ENCODE measurements at regions of chr18 and their contacts with region 1.

Region 1: DNA sequence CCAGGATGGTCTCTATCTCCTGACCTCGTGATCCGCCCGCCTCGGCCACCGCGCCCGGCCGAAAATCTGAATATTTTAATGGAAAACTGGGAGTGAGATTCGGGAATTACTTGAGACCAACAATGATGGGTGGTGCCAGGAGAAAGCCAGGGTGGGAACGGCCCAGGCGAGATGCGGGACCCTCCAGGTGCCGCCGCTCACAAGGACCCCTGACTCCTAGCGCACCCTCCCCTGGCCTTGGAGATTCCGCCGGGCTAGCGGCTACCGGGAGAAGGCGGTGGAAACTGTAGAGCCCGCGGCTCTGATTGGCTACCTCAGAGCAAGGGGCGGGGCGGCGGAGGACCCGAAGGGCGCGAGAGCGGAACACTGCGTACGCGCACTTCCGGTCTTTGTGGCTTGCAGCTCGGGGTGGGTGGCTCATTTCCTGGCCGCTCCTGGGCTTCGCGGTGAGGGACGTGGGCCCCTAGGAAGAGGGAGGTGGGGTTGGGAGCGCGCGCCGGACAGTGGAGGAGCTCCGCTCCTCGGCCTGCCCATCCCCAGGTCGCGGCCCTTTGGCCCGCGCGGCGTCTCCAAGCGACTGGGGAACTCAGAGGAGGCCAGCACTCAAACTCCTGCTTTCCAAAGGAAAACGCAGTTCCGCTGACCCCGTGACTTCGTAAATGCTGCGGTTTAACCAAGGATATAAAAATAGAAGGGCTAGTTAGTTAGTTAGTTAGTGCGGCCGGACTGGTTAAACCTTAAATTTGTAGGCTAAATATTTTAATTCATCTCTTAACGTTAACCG is at the start of gene ZNF397:
- DNase-seq: peak; percentile 95
- H3K4me3 Mint-ChIP-seq: peak within 1 kb of the TSS; percentile 97
- H3K27ac Mint-ChIP-seq: peak within 1 kb of the TSS; percentile 97
- H3K4me1 Mint-ChIP-seq: peaks cover 12% of the 10 kb centered on the region
- H3K27me3 Mint-ChIP-seq: no peaks in the 10 kb centered on the region
- total RNA-seq, gene ZNF397: 18.8 and 21.0 TPM in 2 replicates

Region 2: GRCh38 chr18:34821749-34822148 is 419.1 kb before region 1 on chr18:
- intact Hi-C with region 1: no loop called
- DNase-seq: no peak
- H3K4me3 Mint-ChIP-seq: no peak overlapping the region
- H3K27ac Mint-ChIP-seq: no peak overlapping the region
- H3K4me1 Mint-ChIP-seq: no peaks in the 10 kb centered on the region
- H3K27me3 Mint-ChIP-seq: peaks cover 11% of the 10 kb centered on the region

Region 3: GRCh38 chr18:35040988-35041814 is 199.7 kb before region 1 on chr18 and contains the start of gene MAPRE2:
- intact Hi-C with region 1: loop called (anchors 1 kb)
- DNase-seq: peak; percentile 98
- H3K4me3 Mint-ChIP-seq: peak within 1 kb of the TSS; percentile 96
- H3K27ac Mint-ChIP-seq: peak within 1 kb of the TSS; percentile 99
- H3K4me1 Mint-ChIP-seq: peaks cover 57% of the 10 kb centered on the region
- H3K27me3 Mint-ChIP-seq: no peaks in the 10 kb centered on the region
- total RNA-seq, gene MAPRE2: 50.7 TPM in 2 replicates

Region 4: DNA sequence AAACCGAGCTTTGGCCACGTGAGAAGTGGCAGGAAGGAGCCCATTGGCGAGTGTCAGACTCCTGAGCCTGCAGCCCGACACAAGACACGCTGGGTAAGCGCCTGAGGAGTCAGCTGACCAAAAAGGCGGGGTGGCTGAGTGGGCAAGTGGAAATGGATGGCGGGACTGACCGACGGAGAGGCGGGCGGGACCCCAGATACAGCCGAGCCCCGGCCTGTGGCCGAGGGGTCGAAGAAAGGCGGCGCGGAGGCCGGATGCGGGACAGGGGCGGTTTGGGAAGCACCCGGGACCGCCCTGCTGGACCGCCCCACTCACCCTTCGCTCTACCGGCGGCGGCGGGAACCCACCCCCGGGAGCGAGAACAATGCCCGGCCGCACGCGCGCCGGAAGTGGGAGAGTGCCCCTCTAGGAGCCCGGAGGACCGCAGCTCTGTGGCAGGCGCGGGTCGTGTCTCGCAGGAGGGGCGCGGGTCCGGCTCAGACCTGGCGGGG is 26.4 kb after region 1 on chr18:
- intact Hi-C with region 1: loop called (anchors 2 kb)
- DNase-seq: peak; percentile 16
- H3K4me3 Mint-ChIP-seq: peak overlapping the region; percentile 83
- H3K27ac Mint-ChIP-seq: peak overlapping the region; percentile 78
- H3K4me1 Mint-ChIP-seq: peaks cover 10% of the 10 kb centered on the region
- H3K27me3 Mint-ChIP-seq: peaks cover 2% of the 10 kb centered on the region

Region 5: DNA sequence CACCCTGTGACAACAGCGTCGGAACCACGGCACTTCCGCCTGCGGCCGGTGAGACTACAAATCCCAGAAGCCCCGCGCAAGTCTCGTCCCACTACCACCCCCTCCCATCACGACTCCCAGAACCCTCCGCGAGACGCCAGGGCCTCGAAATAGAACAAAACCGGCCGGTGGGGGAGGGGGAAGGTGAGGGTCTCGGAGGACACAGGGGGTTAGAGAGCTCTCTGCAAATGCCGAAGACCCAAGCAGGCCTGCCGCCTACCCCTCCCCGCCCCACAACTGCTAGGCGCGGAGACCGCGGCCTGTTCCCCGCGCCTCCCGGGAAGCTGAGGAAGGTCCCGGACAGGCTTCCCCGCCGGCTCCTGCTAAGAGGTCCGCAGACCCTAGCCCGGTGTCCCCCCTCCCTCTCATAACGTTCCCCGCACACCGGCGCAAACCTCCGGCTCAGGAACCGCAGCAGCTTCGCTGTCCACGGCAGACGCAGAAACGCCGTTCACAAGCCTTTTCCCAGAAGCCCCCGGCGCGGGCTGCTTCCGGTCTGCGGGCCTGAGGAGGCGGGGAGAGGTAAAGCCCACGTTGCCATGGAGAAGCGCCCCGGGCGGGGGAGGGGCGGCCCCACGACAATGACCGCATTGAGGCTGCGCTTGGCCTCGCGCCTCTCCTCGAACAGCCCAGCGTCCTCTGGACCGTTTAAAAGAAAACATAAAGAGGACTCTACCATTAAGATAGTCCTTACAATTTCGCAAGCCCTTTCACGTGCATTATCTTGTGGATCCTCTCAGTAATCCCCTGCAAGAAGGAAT is 103.3 kb after region 1 on chr18 and contains the start of gene ZNF24:
- intact Hi-C with region 1: loop called (anchors 1 kb)
- DNase-seq: peak; percentile 90
- H3K4me3 Mint-ChIP-seq: peak within 1 kb of the TSS; percentile 99
- H3K27ac Mint-ChIP-seq: peak within 1 kb of the TSS; percentile 98
- H3K4me1 Mint-ChIP-seq: peaks cover 38% of the 10 kb centered on the region
- H3K27me3 Mint-ChIP-seq: no peaks in the 10 kb centered on the region
- total RNA-seq, gene ZNF24: 56.4 and 56.6 TPM in 2 replicates

Region 6: DNA sequence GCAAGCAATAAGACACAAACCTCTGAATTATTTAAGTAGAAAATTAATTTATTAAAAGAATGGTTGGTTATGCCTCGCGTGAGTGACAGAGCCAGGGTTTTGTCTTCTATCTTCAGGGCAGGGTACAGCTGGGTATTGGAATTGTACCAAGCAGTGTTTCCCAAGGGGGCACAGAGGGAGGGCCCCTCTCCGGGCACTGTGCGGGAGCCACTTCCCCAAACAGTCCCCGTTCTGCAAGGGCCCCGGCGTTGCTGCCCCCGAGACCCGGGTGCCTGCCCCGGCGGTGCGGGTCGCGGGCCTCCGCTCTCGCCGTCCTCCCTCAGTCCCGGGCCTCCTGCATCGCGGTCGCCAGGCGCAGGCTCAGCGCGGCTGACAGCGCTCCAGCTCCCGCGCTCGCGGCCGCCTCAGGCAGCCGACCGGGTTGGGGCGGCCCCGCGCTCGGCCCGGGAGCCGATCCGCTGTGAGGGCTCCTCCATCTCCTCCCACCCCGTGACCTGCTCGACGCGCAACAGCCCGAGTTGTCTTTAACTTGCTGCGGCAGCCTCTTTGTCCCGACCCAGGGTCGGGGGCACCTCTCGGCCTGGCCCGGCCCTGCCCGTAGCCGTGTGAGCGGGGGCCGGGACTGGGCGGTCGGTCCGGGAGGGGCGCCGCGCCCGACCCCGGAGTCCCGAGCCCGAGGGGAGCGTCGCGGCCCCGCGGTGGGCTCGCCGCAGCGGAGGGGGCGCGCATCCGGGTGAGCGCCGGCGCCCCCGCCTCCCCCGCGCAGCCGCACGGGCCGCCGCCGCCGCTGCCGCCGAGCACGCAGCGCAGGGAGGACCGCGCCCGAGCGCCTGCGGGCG is 340.1 kb after region 1 on chr18:
- intact Hi-C with region 1: loop called (anchors 5 kb)
- DNase-seq: peak; percentile 44
- H3K4me3 Mint-ChIP-seq: peak overlapping the region; percentile 76
- H3K27ac Mint-ChIP-seq: no peak overlapping the region
- H3K4me1 Mint-ChIP-seq: peaks cover 33% of the 10 kb centered on the region
- H3K27me3 Mint-ChIP-seq: peaks cover 3% of the 10 kb centered on the region

Region 7: GRCh38 chr18:35972197-35973052 is 731.6 kb after region 1 on chr18 and contains the start of gene RMP24:
- intact Hi-C with region 1: loop called (anchors 10 kb)
- DNase-seq: peak; percentile 90
- H3K4me3 Mint-ChIP-seq: peak within 1 kb of the TSS; percentile 98
- H3K27ac Mint-ChIP-seq: peak within 1 kb of the TSS; percentile 98
- H3K4me1 Mint-ChIP-seq: peaks cover 53% of the 10 kb centered on the region
- H3K27me3 Mint-ChIP-seq: no peaks in the 10 kb centered on the region

Measured in activated T-helper 1 cell treated with anti-CD3 and anti-CD28 coated beads, Interleukin-12 subunit alpha, Interleukin-12 subunit beta, Interleukin-2, Interleukin-4 antibody, amounts not matched to agents 30 ng/mL and 10 ng/mL and 1 ng/mL, durations not matched to agents 14 hours and 24 hours and 36 hours (primary cell).